ENCODE measurements at regions of chr2 and their contacts with region 1.

Region 1: DNA sequence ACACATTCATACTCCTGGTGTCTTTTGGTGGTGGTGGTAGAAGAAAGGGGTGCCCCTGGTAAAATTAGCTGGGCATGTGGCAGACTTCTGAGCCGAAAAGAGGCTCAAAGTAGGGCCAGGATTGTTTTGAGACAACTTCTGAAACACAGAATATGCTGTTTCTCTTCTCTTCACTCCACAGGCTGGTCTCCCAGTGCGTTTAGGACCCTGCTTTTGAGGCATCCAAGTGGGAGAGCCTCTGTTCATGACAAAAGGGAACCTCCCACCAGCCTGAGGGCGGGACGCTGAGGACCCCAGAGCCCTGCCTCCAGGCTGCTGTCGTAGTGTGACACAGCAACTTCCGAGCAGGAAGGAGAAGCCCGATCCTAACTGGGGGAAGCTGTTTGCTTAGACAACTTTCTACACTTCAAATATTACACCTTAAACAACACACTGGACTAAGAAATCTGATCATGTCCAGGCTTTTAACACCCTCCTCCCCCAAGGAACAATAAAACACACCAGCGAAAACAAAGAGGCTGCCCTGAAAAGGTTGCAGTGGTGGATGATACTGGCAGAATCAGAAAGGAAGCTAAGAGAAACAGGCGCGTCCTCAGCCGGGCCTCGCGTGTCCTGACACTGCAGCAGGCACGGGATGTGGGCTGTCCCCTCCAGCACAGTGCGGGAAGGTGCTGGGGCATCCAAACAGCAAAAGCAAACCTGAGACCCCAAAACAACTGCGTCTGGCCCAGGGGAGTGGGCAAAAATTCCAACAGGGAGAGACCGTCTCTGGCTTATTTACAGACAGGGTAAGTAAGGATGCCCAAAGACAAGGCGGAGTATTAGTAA is 9.3 kb downstream of the SERTAD2 start:
- DNase-seq: peak; percentile 71 to 82 (median 75)
- ATAC-seq: peak; percentile 69
- H3K4me3 ChIP-seq: no peak overlapping the region
- H3K4me1 ChIP-seq: peaks cover 10% of the 10 kb centered on the region
- CTCF ChIP-seq: no peak

Region 2: DNA sequence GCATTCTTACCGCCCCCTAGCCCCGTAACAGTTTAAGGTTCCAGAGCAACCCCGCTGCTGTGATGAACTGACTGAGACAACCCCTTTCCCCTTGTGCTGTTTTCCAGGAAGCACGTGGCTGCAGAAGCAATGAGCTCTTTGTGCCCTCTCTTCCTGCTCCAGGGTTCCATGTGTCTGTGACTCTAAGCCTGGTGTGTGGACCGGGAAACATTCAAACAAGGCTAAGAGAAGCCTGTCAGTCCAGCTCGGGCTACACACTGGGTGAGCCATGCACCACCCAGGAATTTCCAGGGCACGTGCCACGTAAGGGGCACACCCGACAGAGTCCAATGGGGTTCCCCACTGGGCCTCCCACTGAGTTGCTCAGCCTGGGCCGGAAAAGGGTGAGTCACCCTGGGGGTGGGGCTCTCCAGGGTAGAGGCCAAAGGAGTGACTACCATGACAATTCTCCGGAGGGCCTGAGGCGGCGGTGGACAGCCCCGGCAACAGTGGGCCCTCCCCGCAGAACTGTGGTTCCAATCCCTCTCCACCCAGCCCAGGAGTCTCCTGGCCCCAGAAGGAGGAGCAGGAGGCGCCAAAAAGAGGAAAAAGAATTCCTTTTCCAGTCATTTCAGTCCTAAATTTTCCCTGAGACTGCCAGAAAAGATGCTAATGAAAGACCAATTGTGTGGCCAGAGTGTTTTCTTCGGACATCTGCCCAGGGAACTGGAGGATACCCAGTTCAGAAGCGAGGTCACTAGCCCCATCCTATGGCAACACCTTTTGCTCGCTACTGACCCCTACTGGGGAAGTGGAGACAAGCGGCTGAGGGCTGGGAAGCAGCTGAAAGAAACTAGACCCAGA is 187.0 kb after region 1 on chr2:
- intact Hi-C with region 1: loop called in 1 of 2 experiments (anchors 10 kb)
- DNase-seq: peak; percentile 89 to 95 (median 89)
- ATAC-seq: peak; percentile 98
- H3K4me3 ChIP-seq: no peak overlapping the region
- H3K4me1 ChIP-seq: peaks cover 8% of the 10 kb centered on the region
- CTCF ChIP-seq: peak; percentile 82

Region 3: DNA sequence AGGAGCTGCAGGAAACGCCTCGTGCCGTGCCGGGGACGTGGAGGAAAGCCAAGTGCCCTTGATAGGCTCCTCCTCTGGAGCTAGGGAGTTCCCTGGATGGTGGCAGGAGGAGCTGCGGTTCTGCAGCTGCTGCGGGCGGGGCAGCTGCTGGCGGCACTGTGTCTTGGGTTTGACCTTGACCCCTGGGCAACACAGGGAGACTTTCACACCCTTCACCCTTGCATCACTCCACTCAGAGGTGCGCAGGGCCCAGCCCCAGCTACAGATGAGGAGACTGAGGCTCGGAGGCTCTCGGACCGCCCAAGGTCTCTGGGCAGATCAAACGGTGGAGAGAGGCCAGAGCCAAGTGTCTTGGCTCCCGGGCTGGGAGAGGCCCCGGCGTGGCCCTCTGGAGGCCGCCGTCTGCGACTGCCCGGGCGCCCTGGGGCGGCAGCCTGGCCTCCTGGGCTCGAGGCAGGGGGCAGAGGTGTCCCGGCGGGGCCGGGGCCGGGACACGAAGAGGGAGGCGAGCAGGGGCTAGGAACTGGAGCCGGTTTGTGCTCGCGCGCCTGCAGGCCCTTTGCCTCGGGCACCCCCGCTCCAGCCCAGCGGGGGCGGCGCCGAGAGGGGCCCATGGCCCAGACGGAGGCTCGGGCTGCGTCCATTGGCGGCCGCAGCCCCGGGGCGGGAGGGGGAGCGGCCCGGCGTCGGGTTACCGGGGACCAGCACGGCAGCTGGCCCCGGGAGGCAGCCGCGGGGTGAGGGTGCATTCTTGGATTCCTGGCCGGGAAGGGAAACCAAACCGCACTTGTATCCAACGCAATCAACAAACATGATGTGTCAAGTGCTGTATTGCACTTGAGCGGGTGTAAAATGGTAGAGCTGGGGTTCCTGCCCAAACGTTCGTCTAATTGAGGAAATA is 215.2 kb after region 1 on chr2:
- intact Hi-C with region 1: loop called in 1 of 2 experiments (anchors 5 kb)
- DNase-seq: peak; percentile 93 to 95 (median 95)
- ATAC-seq: peak; percentile 93
- H3K4me3 ChIP-seq: no peak overlapping the region
- H3K4me1 ChIP-seq: peaks cover 25% of the 10 kb centered on the region
- CTCF ChIP-seq: no peak

Measured in mucosa of descending colon (tissue), 3 donors.